GM12878 (cell line): ENCODE measurements at regions of chrX and their contacts with region 1.

Region 1: DNA sequence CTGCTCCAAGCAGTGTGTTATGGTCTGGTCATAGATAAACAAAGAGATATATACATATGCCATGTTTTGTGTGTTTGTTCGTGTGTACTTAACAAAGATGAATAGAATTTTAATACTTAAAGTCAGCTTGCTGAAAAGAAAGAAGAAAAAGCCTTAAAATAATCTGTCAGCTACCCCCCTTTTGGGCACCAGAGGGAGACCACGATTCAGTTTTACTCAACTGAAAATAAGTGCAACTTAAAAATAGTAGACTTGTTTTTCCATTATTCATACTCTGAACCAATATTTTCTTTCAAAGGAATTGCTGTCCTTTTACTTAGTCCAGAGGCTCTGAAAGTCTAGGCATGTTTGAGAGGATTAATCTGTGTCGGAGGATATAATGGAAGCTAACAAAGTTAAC is 181.7 kb upstream of the AGTR2 start:
- DNase-seq: no peak
- ATAC-seq: 0 out of 3 replicates have a peak, but pooled peaks have one; percentile 27
- H3K4me3 ChIP-seq: no peak overlapping the region
- H3K27ac ChIP-seq: no peak overlapping the region
- H3K4me1 ChIP-seq: no peaks in the 10 kb centered on the region
- H3K27me3 ChIP-seq: no peaks in the 10 kb centered on the region
- CTCF ChIP-seq: peak in 2 of 3 experiments; percentile 27 to 34; a peak in 3 of 6 replicates
- EP300 ChIP-seq: no peak
- POLR2A ChIP-seq: no peak
- RAD21 ChIP-seq: peak; percentile 68

Region 2: GRCh38 chrX:115226929-115227328 is 761.9 kb before region 1 on chrX:
- CTCF ChIA-PET with region 1: no interaction called
- POLR2A ChIA-PET with region 1: no interaction called
- RAD21 ChIA-PET with region 1: no interaction called
- SMC1A ChIA-PET with region 1: no interaction called
- in situ Hi-C with region 1: no loop called
- intact Hi-C with region 1: no loop called
- DNase-seq: no peak
- ATAC-seq: peak; percentile 94
- H3K4me3 ChIP-seq: no peak overlapping the region
- H3K27ac ChIP-seq: no peak overlapping the region
- H3K4me1 ChIP-seq: no peaks in the 10 kb centered on the region
- H3K27me3 ChIP-seq: no peaks in the 10 kb centered on the region; a peak in 1 of 4 replicates
- CTCF ChIP-seq: peak; percentile 23 to 61 (median 51); a peak in 3 of 6 replicates
- EP300 ChIP-seq: no peak
- POLR2A ChIP-seq: no peak
- RAD21 ChIP-seq: peak; percentile 61; the same call in 1 of the 2 replicates

Region 3: GRCh38 chrX:115665122-115665521 is 323.7 kb before region 1 on chrX:
- CTCF ChIA-PET with region 1: no interaction called
- POLR2A ChIA-PET with region 1: no interaction called
- RAD21 ChIA-PET with region 1: no interaction called
- SMC1A ChIA-PET with region 1: no interaction called
- in situ Hi-C with region 1: no loop called
- intact Hi-C with region 1: no loop called
- DNase-seq: no peak
- ATAC-seq: no peak
- H3K4me3 ChIP-seq: no peak overlapping the region
- H3K27ac ChIP-seq: no peak overlapping the region
- H3K4me1 ChIP-seq: no peaks in the 10 kb centered on the region
- H3K27me3 ChIP-seq: no peaks in the 10 kb centered on the region
- CTCF ChIP-seq: no peak
- EP300 ChIP-seq: no peak
- POLR2A ChIP-seq: no peak
- RAD21 ChIP-seq: no peak

Region 4: GRCh38 chrX:115957862-115958483 is 30.9 kb before region 1 on chrX:
- CTCF ChIA-PET with region 1: interaction called, 18 read pairs
- POLR2A ChIA-PET with region 1: no interaction called
- RAD21 ChIA-PET with region 1: interaction called, 12 read pairs
- SMC1A ChIA-PET with region 1: interaction called, 13 read pairs
- in situ Hi-C with region 1: no loop called
- intact Hi-C with region 1: no loop called
- DNase-seq: no peak
- ATAC-seq: peak; percentile 56
- H3K4me3 ChIP-seq: no peak overlapping the region
- H3K27ac ChIP-seq: no peak overlapping the region
- H3K4me1 ChIP-seq: no peaks in the 10 kb centered on the region
- H3K27me3 ChIP-seq: no peaks in the 10 kb centered on the region
- CTCF ChIP-seq: peak in 2 of 3 experiments; percentile 23 to 33; a peak in 3 of 6 replicates
- EP300 ChIP-seq: no peak
- POLR2A ChIP-seq: no peak
- RAD21 ChIP-seq: peak; percentile 66

Region 5: DNA sequence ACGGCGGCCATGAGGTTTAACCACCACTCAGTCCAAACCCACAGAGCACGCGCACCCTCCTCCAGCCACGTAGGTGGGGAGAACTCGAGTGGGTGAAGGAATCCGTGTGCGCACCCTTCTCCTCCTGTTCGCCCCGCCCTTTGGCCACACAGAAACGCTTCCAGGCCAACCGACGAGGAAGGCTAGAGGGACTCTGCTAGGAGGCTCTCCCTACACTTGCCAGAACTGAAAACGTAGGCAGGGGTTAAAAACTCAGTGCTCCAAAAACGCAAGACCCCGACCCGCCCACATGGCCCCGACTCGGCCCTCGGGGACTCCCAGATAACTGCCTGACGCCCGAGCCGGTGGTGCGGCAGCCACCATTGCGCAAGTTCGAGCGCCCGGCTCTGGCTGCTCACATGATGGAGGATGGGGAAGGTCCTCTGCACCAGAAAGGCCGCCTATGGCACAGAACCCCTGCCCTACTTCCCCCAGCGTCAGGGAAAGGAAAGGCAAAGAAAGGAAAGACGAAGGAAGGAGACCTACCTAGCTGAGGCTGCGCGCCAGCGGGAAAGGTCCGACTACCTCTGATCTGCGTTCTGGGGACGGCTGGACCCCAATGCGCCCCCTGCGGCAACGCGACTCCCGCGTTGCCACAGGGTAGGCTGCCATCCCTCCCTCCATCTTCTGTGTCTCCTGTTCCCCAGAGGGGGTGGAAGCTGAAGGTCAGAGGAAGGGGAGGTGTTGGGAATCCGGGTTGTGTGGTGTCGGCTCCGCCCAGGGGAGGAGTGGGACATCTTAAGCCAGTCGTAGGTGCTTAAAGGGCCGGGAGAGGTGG is 20.2 kb before region 1 on chrX:
- CTCF ChIA-PET with region 1: no interaction called
- POLR2A ChIA-PET with region 1: interaction called, 3 read pairs
- RAD21 ChIA-PET with region 1: interaction called, 4 read pairs
- SMC1A ChIA-PET with region 1: interaction called, 11 read pairs
- in situ Hi-C with region 1: no loop called
- intact Hi-C with region 1: no loop called
- DNase-seq: no peak
- ATAC-seq: peak; percentile 79
- H3K4me3 ChIP-seq: no peak overlapping the region
- H3K27ac ChIP-seq: no peak overlapping the region
- H3K4me1 ChIP-seq: no peaks in the 10 kb centered on the region
- H3K27me3 ChIP-seq: no peaks in the 10 kb centered on the region; a peak in 1 of 4 replicates
- CTCF ChIP-seq: no peak
- EP300 ChIP-seq: no peak
- POLR2A ChIP-seq: no peak
- RAD21 ChIP-seq: no peak

Region 6: DNA sequence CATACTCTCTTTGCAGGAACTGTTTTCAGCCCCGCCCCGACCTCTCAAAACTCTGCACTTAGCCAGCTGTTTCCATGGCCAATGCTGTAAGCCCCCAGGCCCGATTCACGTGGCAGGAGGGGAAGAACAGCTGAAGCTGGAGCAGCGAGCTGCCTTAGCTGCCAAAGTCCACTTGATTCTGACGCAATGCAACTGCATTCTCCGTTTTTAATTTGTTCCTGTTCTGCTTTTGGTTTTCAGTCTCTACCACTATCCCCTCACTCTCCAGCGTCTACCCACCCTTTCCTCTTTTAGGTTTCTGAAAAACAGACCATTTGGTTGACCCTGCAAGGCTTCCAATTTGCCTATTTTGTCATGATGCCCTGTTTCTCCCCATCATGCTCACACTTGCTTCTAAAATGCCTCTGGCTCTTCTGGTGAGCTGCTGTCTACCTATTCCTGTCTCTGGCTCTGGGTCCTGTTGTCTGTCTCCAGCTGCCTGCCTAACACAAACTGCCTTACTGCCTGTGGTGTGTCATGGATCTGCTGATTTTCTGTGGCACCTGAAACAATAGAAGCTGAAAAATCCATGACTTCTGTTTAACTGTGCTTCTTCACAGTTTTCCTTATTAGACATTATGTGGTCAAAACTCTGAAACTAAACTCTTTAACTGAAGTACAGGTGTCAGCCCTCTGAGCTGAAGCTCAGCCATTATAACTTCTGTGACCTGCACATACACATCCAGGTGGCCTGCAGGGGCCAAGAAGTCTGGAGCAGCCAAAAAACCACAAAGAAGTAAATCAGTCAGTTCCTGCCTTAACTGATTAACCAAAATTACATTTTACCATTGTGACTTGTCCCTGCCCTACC is 21.3 kb after region 1 on chrX:
- CTCF ChIA-PET with region 1: interaction called, 13 read pairs
- POLR2A ChIA-PET with region 1: no interaction called
- RAD21 ChIA-PET with region 1: interaction called, 27 read pairs
- SMC1A ChIA-PET with region 1: interaction called, 46 read pairs
- in situ Hi-C with region 1: no loop called
- intact Hi-C with region 1: no loop called
- DNase-seq: peak; percentile 36
- ATAC-seq: peak; percentile 89
- H3K4me3 ChIP-seq: no peak overlapping the region
- H3K27ac ChIP-seq: no peak overlapping the region
- H3K4me1 ChIP-seq: no peaks in the 10 kb centered on the region
- H3K27me3 ChIP-seq: no peaks in the 10 kb centered on the region
- CTCF ChIP-seq: no peak
- EP300 ChIP-seq: peak; percentile 85 to 95; a peak in 3 of 4 replicates
- POLR2A ChIP-seq: no peak
- RAD21 ChIP-seq: no peak

Region 7: GRCh38 chrX:116198810-116199209 is 210.0 kb after region 1 on chrX:
- CTCF ChIA-PET with region 1: interaction called, 23 read pairs
- POLR2A ChIA-PET with region 1: no interaction called
- RAD21 ChIA-PET with region 1: interaction called, 10 read pairs
- SMC1A ChIA-PET with region 1: interaction called, 31 read pairs
- in situ Hi-C with region 1: loop called (anchors 10 kb)
- intact Hi-C with region 1: loop called (anchors 2 kb)
- DNase-seq: no peak
- ATAC-seq: peak; percentile 67
- H3K4me3 ChIP-seq: no peak overlapping the region
- H3K27ac ChIP-seq: no peak overlapping the region
- H3K4me1 ChIP-seq: no peaks in the 10 kb centered on the region
- H3K27me3 ChIP-seq: no peaks in the 10 kb centered on the region
- CTCF ChIP-seq: peak in 2 of 3 experiments; percentile 25 to 32; a peak in 3 of 6 replicates
- EP300 ChIP-seq: no peak
- POLR2A ChIP-seq: no peak
- RAD21 ChIP-seq: peak; percentile 21; the same call in 1 of the 2 replicates

Region 8: DNA sequence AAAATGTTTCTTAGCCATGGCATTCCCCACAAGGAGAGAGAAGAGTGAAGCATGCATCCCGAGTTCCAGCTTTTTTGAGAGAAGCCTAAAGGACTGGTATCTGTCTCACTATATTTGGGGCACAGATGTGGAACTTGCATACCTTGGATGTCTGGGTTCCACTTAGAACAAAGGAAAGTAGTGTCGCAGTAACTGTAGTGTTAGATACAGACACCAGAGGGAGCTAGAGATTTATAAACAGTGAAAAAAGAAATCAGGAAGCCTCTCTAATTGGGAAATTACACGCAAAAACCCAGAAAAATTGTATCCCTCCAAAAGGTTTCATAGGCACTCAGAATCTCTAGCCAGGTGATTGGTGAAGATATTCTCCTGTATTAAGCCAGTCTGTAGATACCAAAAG is 216.1 kb after region 1 on chrX:
- CTCF ChIA-PET with region 1: interaction called, 12 read pairs
- POLR2A ChIA-PET with region 1: no interaction called
- RAD21 ChIA-PET with region 1: interaction called, 13 read pairs
- SMC1A ChIA-PET with region 1: interaction called, 31 read pairs
- in situ Hi-C with region 1: no loop called
- intact Hi-C with region 1: no loop called
- DNase-seq: no peak
- ATAC-seq: peak; percentile 52; the same call in 2 of the 3 replicates
- H3K4me3 ChIP-seq: no peak overlapping the region
- H3K27ac ChIP-seq: no peak overlapping the region
- H3K4me1 ChIP-seq: no peaks in the 10 kb centered on the region
- H3K27me3 ChIP-seq: no peaks in the 10 kb centered on the region
- CTCF ChIP-seq: peak; percentile 49 to 56 (median 51); a peak in 4 of 6 replicates
- EP300 ChIP-seq: no peak
- POLR2A ChIP-seq: no peak
- RAD21 ChIP-seq: peak; percentile 65